ENCODE measurements at regions of chr12 and their contacts with region 1.

Region 1: DNA sequence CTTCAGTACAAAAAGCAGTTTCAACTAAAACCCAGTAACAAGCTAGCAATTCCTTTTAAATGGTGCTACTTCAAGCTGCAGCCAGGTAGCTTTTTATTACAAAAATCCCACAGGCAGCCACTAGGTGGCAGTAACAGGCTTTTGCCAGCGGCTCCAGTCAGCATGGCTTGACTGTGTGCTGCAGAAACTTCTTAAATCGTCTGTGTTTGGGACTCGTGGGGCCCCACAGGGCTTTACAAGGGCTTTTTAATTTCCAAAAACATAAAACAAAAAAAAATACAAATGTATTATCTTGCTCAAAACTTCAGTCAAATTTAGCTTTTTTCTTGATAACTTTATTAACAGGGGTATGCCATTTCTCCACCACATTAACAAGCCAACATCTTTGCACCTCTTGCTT is 3.6 kb upstream of the CLEC4E start:
- DNase-seq: peak; percentile 81
- H3K4me3 ChIP-seq: no peak overlapping the region
- H3K27ac ChIP-seq: no peak overlapping the region
- H3K4me1 ChIP-seq: no peaks in the 10 kb centered on the region
- H3K27me3 ChIP-seq: peaks cover 10 to 22% of the 10 kb centered on the region in 2 experiments
- CTCF ChIP-seq: peak; percentile 74 to 81
- POLR2A ChIP-seq: no peak

Region 2: DNA sequence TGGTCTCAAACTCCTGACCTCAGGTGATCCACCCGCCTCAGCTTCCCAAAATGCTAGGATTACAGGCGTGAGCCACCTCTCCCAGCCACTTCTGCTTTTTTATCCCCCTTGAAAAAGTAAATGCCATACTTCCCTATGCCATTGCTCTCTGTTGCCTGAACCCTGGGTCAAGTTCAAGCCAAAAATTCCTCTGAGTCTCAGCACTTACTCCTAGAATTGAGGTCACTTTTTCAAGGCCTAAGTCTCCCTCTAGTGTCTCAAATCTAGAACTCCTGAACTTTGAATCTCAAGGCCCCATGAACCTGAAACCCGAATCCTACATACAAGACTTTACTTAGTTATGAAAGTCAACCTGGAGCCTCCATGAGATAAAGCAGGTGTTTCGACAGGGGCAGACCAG is 877.2 kb before region 1 on chr12:
- CTCF ChIA-PET with region 1: no interaction called
- POLR2A ChIA-PET with region 1: no interaction called
- dilution Hi-C with region 1: no loop called
- intact Hi-C with region 1: no loop called
- DNase-seq: no peak
- H3K4me3 ChIP-seq: no peak overlapping the region
- H3K27ac ChIP-seq: no peak overlapping the region
- H3K4me1 ChIP-seq: no peaks in the 10 kb centered on the region
- H3K27me3 ChIP-seq: no peaks in the 10 kb centered on the region
- CTCF ChIP-seq: peak in 1 of 2 donors; percentile 14
- POLR2A ChIP-seq: no peak

Region 3: GRCh38 chr12:8562310-8562709 is 18.0 kb after region 1 on chr12:
- CTCF ChIA-PET with region 1: interaction called, 16 read pairs
- POLR2A ChIA-PET with region 1: no interaction called
- dilution Hi-C with region 1: no loop called
- intact Hi-C with region 1: no loop called
- DNase-seq: no peak
- H3K4me3 ChIP-seq: no peak overlapping the region
- H3K27ac ChIP-seq: no peak overlapping the region
- H3K4me1 ChIP-seq: no peaks in the 10 kb centered on the region
- H3K27me3 ChIP-seq: peaks cover 2 to 10% of the 10 kb centered on the region in 2 experiments
- CTCF ChIP-seq: peak in 1 of 2 donors; percentile 12
- POLR2A ChIP-seq: no peak

Region 4: DNA sequence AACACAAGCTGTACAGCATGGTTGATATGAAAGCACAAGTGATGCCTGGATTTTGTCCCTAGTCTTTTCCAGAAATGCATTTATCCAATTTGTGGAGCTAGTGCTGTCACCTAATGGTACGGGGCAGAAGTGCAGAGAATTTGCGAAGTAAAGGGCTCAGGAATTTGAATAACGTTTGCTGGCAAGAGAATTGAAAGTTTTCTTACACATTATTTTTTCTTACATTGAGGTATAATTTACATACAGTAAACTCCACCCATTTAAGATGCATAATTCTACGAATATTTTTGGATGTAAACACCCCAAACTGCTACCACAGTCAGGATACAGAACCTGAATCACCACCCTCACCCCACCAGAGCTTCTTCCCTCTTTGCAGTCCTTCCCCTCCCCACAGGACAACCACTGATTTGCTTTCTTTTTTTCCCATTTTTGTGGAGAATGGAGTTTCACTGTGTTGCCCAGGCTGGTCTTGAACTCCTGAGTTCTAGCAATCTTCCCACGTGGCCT is 64.8 kb after region 1 on chr12:
- CTCF ChIA-PET with region 1: interaction called, 256 read pairs
- POLR2A ChIA-PET with region 1: interaction called, 3 read pairs
- dilution Hi-C with region 1: no loop called
- intact Hi-C with region 1: loop called (anchors 1 kb)
- DNase-seq: peak; percentile 67
- H3K4me3 ChIP-seq: no peak overlapping the region
- H3K27ac ChIP-seq: no peak overlapping the region
- H3K4me1 ChIP-seq: no peaks in the 10 kb centered on the region
- H3K27me3 ChIP-seq: peaks cover 4 to 9% of the 10 kb centered on the region in 2 experiments
- CTCF ChIP-seq: peak; percentile 58 to 75
- POLR2A ChIP-seq: no peak

Region 5: GRCh38 chr12:8655421-8655820 is 111.1 kb after region 1 on chr12:
- CTCF ChIA-PET with region 1: interaction called, 56 read pairs
- POLR2A ChIA-PET with region 1: no interaction called
- dilution Hi-C with region 1: no loop called
- intact Hi-C with region 1: no loop called
- DNase-seq: no peak
- H3K4me3 ChIP-seq: no peak overlapping the region
- H3K27ac ChIP-seq: no peak overlapping the region
- H3K4me1 ChIP-seq: no peaks in the 10 kb centered on the region
- H3K27me3 ChIP-seq: no peaks in the 10 kb centered on the region
- CTCF ChIP-seq: no peak
- POLR2A ChIP-seq: no peak

Region 6: DNA sequence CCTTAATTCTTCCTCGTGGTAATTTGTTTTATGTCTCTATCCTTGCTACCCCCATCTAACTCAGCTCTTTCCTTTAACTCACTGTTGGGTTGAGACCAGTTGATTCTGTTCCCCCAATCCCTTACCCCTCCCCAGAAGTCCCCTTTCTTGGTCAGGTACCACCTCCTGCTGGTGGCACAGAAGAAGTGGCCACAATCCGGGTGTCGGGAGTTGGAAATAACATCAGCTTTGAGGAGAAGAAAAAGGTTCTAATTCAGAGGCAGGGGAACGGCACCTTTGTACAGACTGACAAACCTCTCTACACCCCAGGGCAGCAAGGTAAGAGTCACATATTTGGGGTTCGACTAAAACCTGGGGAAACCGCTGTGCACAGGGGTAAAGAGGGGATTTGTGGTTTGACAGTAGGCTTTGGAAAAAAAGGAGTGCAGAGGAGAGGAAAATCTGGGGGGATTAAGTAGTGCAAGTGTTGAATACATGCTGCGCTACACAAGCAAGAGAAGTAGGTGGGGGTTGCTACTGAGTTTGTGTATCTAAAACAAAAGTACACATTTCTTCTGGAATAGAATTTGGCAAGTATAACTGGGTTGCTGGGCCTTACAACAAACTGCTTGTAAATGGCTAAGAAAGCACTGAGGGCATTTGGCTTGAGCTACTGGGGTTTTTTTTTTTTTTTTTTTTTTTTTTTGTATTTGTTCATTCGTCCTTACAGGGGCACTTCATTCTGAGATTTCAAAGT is 279.4 kb after region 1 on chr12:
- CTCF ChIA-PET with region 1: interaction called, 32 read pairs
- POLR2A ChIA-PET with region 1: no interaction called
- dilution Hi-C with region 1: no loop called
- intact Hi-C with region 1: loop called (anchors 1 kb)
- DNase-seq: peak; percentile 53
- H3K4me3 ChIP-seq: no peak overlapping the region
- H3K27ac ChIP-seq: no peak overlapping the region
- H3K4me1 ChIP-seq: no peaks in the 10 kb centered on the region
- H3K27me3 ChIP-seq: peaks cover 1 to 3% of the 10 kb centered on the region in 2 experiments
- CTCF ChIP-seq: peak; percentile 62 to 65
- POLR2A ChIP-seq: no peak

Region 7: DNA sequence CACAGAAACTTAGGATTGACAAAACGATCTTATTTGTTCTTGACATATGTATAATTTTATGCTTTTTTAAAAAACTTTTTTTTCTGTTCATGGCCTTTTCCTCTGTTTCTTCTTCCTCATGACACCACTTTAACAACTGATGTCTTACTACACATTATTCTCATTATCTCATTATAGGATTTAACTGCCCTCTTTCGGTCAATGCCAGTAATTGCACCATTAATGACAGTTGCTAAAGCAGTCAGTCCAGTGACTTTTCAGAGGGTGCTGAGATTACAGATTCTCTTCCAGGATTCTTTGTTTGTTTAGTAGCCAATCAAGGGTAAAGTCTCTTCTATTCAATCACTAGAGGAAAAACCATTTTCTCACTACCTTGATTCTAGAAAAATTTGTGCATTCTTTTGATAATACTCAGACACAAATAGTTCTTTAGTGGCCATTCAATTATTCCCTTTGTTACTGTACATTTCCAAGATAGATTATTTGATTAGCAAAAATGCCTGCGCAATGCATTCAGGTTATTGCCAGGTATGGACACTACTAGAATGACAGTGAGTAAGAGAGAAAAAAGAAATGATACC is 495.2 kb after region 1 on chr12:
- CTCF ChIA-PET with region 1: interaction called, 19 read pairs
- POLR2A ChIA-PET with region 1: no interaction called
- dilution Hi-C with region 1: no loop called
- intact Hi-C with region 1: no loop called
- DNase-seq: peak; percentile 63
- H3K4me3 ChIP-seq: no peak overlapping the region
- H3K27ac ChIP-seq: no peak overlapping the region
- H3K4me1 ChIP-seq: no peaks in the 10 kb centered on the region
- H3K27me3 ChIP-seq: peaks cover 7 to 8% of the 10 kb centered on the region in 2 experiments
- CTCF ChIP-seq: peak; percentile 47 to 54
- POLR2A ChIP-seq: no peak

Measured in endothelial cell of umbilical vein (primary cell).